ENCODE measurements at regions of chr19 and their contacts with region 1.

Region 1: GRCh38 chr19:44845612-44846454 is at the start of gene NECTIN2:
- DNase-seq: peak; percentile 95
- ATAC-seq: peak; percentile 61
- H3K4me3 ChIP-seq: peak within 1 kb of the TSS; percentile 76 to 95 (median 84)
- H3K27ac ChIP-seq: peak within 1 kb of the TSS; percentile 95
- H3K4me1 ChIP-seq: peaks cover 48% of the 10 kb centered on the region
- H3K27me3 ChIP-seq: no peaks in the 10 kb centered on the region; a peak in 1 of 5 replicates
- CTCF ChIP-seq: peak; percentile 94
- EP300 ChIP-seq: no peak
- POLR2A ChIP-seq: peak; percentile 62 to 87
- RAD21 ChIP-seq: peak; percentile 30; the same call in 1 of the 2 replicates
- total RNA-seq, gene NECTIN2: 32.7 and 75.4 TPM in 2 replicates

Region 2: GRCh38 chr19:44782729-44783128 is 63.1 kb before region 1 on chr19:
- CTCF ChIA-PET with region 1: interaction called, 50 read pairs
- POLR2A ChIA-PET with region 1: interaction called, 4 read pairs
- in situ Hi-C with region 1: no loop called
- intact Hi-C with region 1: loop called (anchors 1 kb)
- DNase-seq: no peak
- ATAC-seq: 0 out of 3 replicates have a peak, but pooled peaks have one; percentile 28
- H3K4me3 ChIP-seq: no peak overlapping the region
- H3K27ac ChIP-seq: peak overlapping the region; percentile 17
- H3K4me1 ChIP-seq: peaks cover 23% of the 10 kb centered on the region
- H3K27me3 ChIP-seq: no peaks in the 10 kb centered on the region
- CTCF ChIP-seq: peak; percentile 23
- EP300 ChIP-seq: no peak
- POLR2A ChIP-seq: no peak
- RAD21 ChIP-seq: no peak

Region 3: GRCh38 chr19:44800461-44800860 is 45.4 kb before region 1 on chr19:
- CTCF ChIA-PET with region 1: interaction called, 33 read pairs
- POLR2A ChIA-PET with region 1: interaction called, 23 read pairs
- in situ Hi-C with region 1: loop called (anchors 10 kb)
- intact Hi-C with region 1: loop called (anchors 2 kb)
- DNase-seq: peak; percentile 86
- ATAC-seq: peak; percentile 91
- H3K4me3 ChIP-seq: peak overlapping the region in 1 of 3 experiments; percentile 60; a peak in 2 of 6 replicates
- H3K27ac ChIP-seq: peak overlapping the region; percentile 85
- H3K4me1 ChIP-seq: peaks cover 64% of the 10 kb centered on the region
- H3K27me3 ChIP-seq: no peaks in the 10 kb centered on the region
- CTCF ChIP-seq: peak; percentile 96
- EP300 ChIP-seq: peak in 1 of 2 experiments; percentile 13; a peak in 1 of 4 replicates
- POLR2A ChIP-seq: no peak
- RAD21 ChIP-seq: peak; percentile 90

Region 4: GRCh38 chr19:44856421-44857083 is 10.7 kb after region 1 on chr19:
- CTCF ChIA-PET with region 1: no interaction called
- POLR2A ChIA-PET with region 1: interaction called, 11 read pairs
- in situ Hi-C with region 1: no loop called
- intact Hi-C with region 1: no loop called
- DNase-seq: peak; percentile 64
- ATAC-seq: peak; percentile 76
- H3K4me3 ChIP-seq: peak overlapping the region in 1 of 3 experiments; percentile 20; a peak in 1 of 6 replicates
- H3K27ac ChIP-seq: peak overlapping the region; percentile 72
- H3K4me1 ChIP-seq: peaks cover 69% of the 10 kb centered on the region
- H3K27me3 ChIP-seq: no peaks in the 10 kb centered on the region
- CTCF ChIP-seq: peak; percentile 29; the same call in 1 of the 2 replicates
- EP300 ChIP-seq: 0 out of 4 replicates have a peak, but pooled peaks of 1 of the 2 experiments have one; percentile 7
- POLR2A ChIP-seq: peak in 1 of 2 experiments; percentile 19; a peak in 1 of 4 replicates
- RAD21 ChIP-seq: no peak

Measured in HepG2 (cell line).